Cardiac septum (tissue), 1 donor: ENCODE measurements at regions of chr7 and their contacts with region 1.

Region 1: DNA sequence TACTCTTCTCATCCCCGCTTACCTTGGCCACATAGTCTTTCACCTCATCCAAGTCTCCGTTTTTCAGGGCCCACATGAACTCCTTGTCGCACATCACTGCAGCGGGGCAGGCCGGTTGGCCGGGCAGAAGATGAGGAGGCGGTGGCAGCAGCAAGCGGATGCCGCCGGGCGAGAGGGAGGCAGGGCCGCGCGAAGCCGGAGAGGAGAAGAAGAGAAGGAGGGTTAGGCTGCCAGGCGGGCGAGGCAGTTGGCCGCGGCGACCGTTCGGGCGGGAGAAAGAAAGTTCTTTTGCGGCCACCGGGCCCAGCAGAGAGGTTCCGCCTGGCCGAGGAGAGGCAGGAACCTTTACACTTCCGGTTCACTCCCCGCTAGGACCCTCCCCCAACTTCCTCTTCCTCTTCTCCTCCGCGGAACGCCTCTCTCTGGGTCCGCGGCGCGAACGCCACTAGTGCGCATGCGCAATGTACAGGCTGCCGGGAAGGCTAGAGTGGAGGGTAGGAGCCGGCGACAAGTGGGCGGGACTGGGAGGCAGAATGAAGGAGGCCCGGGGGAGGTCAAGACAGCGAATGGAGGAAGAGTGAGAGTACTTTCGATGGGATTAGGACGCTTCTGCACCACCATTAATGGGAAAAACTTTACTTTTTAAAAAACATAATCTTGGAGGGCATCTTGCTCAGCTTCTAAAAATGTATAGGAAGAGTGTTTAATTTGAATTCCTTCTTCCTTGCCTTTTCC is at the start of gene MTPN:
- DNase-seq: peak; percentile 100
- total RNA-seq, gene MTPN: 121 TPM

Region 2: GRCh38 chr7:135662373-135663114 is 314.6 kb before region 1 on chr7 and contains the start of gene STMP1:
- intact Hi-C with region 1: loop called (anchors 10 kb)
- DNase-seq: peak; percentile 98
- total RNA-seq, gene STMP1: 31.4 TPM

Region 3: DNA sequence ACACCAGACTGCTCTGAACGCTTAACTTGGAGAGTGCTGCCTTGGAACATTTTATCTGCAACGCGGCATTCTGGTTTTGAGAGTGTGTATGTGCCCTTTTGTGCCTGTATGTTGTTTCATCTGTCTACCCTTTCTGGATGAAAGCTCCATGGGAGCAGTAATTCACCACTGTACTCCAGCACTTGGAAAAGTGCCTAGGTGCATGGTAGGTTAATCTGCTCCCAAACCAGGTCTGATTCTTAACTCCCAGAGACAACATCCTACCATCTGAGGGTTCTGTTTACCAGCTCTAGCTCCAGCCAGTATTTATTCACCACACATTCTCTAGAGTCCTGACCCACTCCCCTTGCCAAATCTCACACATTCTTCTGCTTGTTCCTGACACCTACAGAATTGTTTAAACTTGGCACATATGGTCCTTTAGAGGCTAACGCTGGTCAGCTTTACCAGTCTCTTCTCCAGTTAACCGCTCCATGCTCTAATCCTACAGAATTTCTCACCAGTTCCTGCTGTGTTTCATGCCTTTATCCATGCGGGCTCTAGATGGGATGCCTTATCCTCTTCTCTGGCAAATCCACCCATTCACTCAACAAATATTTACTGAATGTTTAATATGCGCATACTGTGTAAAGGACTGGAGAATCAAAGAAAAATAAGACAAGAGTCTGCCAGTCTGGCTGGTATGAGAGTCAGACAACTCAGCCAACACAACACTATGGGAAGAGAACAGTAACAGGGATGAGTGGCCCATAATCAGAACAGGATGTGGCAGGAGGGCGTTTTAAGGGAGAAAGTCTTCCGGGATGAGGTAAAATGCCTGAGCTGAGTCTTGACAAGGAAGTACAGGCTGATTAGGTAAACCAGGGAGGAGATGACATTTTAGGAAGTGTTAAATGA is 46.4 kb before region 1 on chr7:
- intact Hi-C with region 1: loop called (anchors 5 kb)
- DNase-seq: no peak

Region 4: GRCh38 chr7:136009488-136010079 is 32.4 kb after region 1 on chr7:
- intact Hi-C with region 1: no loop called
- DNase-seq: no peak